ENCODE measurements at regions of chr21 and their contacts with region 1.

Region 1: GRCh38 chr21:31088315-31088714 is 50.0 kb upstream of the KRTAP19-8 start:
- DNase-seq: no peak
- H3K4me3 Mint-ChIP-seq: no peak overlapping the region
- H3K27ac Mint-ChIP-seq: no peak overlapping the region
- H3K4me1 Mint-ChIP-seq: peaks cover 10% of the 10 kb centered on the region
- H3K27me3 Mint-ChIP-seq: peaks cover 9% of the 10 kb centered on the region

Region 2: GRCh38 chr21:30044445-30045064 is 1043.8 kb before region 1 on chr21:
- CTCF ChIA-PET with region 1: no interaction called
- intact Hi-C with region 1: loop called (anchors 2 kb)
- DNase-seq: no peak
- H3K4me3 Mint-ChIP-seq: no peak overlapping the region
- H3K27ac Mint-ChIP-seq: no peak overlapping the region
- H3K4me1 Mint-ChIP-seq: no peaks in the 10 kb centered on the region
- H3K27me3 Mint-ChIP-seq: peaks cover 10% of the 10 kb centered on the region

Region 3: GRCh38 chr21:30502041-30502440 is 586.3 kb before region 1 on chr21 and contains the start of gene KRTAP19-5:
- CTCF ChIA-PET with region 1: interaction called, 3 read pairs
- intact Hi-C with region 1: loop called (anchors 1 kb)
- DNase-seq: no peak
- H3K4me3 Mint-ChIP-seq: no peak within 1 kb of the TSS
- H3K27ac Mint-ChIP-seq: no peak within 1 kb of the TSS
- H3K4me1 Mint-ChIP-seq: no peaks in the 10 kb centered on the region
- H3K27me3 Mint-ChIP-seq: peaks cover 4% of the 10 kb centered on the region
- total RNA-seq, gene KRTAP19-5: not detected

Region 4: GRCh38 chr21:31078216-31078615 is 10.1 kb before region 1 on chr21:
- CTCF ChIA-PET with region 1: interaction called, 14 read pairs
- intact Hi-C with region 1: no loop called
- DNase-seq: no peak
- H3K4me3 Mint-ChIP-seq: no peak overlapping the region
- H3K27ac Mint-ChIP-seq: no peak overlapping the region
- H3K4me1 Mint-ChIP-seq: no peaks in the 10 kb centered on the region
- H3K27me3 Mint-ChIP-seq: no peaks in the 10 kb centered on the region